ENCODE measurements at regions of chr1 and their contacts with region 1.

Region 1: GRCh38 chr1:64956733-64957441 is 9.5 kb downstream of the JAK1 start:
- DNase-seq: peak; percentile 73
- ATAC-seq: peak; percentile 78
- H3K4me3 ChIP-seq: peak overlapping the region in 3 of 5 experiments; percentile 0 to 35 (median 18)
- H3K4me3 Mint-ChIP-seq: no peak overlapping the region
- H3K27ac ChIP-seq: peak overlapping the region; percentile 66 to 68
- H3K27ac Mint-ChIP-seq: no peak overlapping the region
- H3K4me1 ChIP-seq: peaks cover 95 to 96% of the 10 kb centered on the region in 2 donors
- H3K4me1 Mint-ChIP-seq: peaks cover 60% of the 10 kb centered on the region
- H3K27me3 ChIP-seq: no peaks in the 10 kb centered on the region
- H3K27me3 Mint-ChIP-seq: no peaks in the 10 kb centered on the region
- CTCF ChIP-seq: no peak

Region 2: GRCh38 chr1:64875101-64875500 is 81.8 kb before region 1 on chr1:
- CTCF ChIA-PET with region 1: no interaction called
- POLR2A ChIA-PET with region 1: no interaction called
- intact Hi-C with region 1: no loop called
- DNase-seq: no peak
- ATAC-seq: no peak
- H3K4me3 ChIP-seq: no peak overlapping the region
- H3K4me3 Mint-ChIP-seq: no peak overlapping the region
- H3K27ac ChIP-seq: no peak overlapping the region
- H3K27ac Mint-ChIP-seq: no peak overlapping the region
- H3K4me1 ChIP-seq: no peaks in the 10 kb centered on the region
- H3K4me1 Mint-ChIP-seq: no peaks in the 10 kb centered on the region
- H3K27me3 ChIP-seq: no peaks in the 10 kb centered on the region
- H3K27me3 Mint-ChIP-seq: no peaks in the 10 kb centered on the region
- CTCF ChIP-seq: no peak

Region 3: DNA sequence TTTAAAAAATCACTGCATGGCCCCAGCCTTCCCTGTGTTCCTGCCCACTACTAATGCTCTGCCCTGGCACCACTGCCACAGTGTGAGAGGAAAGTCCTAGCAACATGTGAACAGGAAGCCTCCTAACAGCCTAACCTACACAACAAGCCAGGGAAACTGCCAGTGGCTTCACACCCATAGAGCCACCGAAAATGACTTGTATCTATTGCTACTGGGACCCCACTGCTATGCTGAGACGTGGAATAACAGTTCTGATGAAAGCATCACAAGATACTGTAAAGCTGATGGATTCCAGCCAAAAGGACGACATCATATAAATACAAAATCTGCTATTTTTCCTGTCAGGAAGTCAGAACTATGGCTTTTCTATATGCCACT is 65.5 kb before region 1 on chr1:
- CTCF ChIA-PET with region 1: no interaction called
- POLR2A ChIA-PET with region 1: no interaction called
- intact Hi-C with region 1: no loop called
- DNase-seq: no peak
- ATAC-seq: no peak
- H3K4me3 ChIP-seq: no peak overlapping the region
- H3K4me3 Mint-ChIP-seq: peak overlapping the region; percentile 54
- H3K27ac ChIP-seq: no peak overlapping the region
- H3K27ac Mint-ChIP-seq: no peak overlapping the region
- H3K4me1 ChIP-seq: peaks cover 63 to 86% of the 10 kb centered on the region in 2 donors
- H3K4me1 Mint-ChIP-seq: peaks cover 91% of the 10 kb centered on the region
- H3K27me3 ChIP-seq: no peaks in the 10 kb centered on the region
- H3K27me3 Mint-ChIP-seq: no peaks in the 10 kb centered on the region
- CTCF ChIP-seq: no peak

Region 4: DNA sequence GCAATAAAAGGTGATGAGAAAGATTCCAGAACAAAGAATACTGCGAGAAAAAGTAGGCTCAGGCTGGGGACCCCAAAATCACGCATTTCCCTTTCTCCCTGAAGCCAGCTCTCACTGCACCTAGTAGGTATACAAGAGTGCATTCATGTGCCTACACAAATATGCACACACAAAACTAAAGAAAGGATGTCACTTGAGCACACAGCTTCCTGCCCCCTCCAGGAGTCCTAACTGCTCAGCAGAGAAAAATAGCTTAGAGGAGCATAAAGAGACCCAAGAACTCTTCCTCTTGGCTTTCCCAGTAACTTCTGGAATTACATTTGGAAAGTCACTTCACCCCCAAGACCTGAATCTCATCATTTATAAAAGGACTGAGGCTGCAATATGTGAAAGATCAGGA is 28.6 kb before region 1 on chr1:
- CTCF ChIA-PET with region 1: no interaction called
- POLR2A ChIA-PET with region 1: no interaction called
- intact Hi-C with region 1: loop called (anchors 5 kb)
- DNase-seq: no peak
- ATAC-seq: no peak
- H3K4me3 ChIP-seq: no peak overlapping the region
- H3K4me3 Mint-ChIP-seq: no peak overlapping the region
- H3K27ac ChIP-seq: peak overlapping the region in 1 of 2 donors; percentile 27
- H3K27ac Mint-ChIP-seq: peak overlapping the region; percentile 5
- H3K4me1 ChIP-seq: peaks cover 53 to 71% of the 10 kb centered on the region in 2 donors
- H3K4me1 Mint-ChIP-seq: peaks cover 89% of the 10 kb centered on the region
- H3K27me3 ChIP-seq: no peaks in the 10 kb centered on the region
- H3K27me3 Mint-ChIP-seq: no peaks in the 10 kb centered on the region
- CTCF ChIP-seq: no peak